ENCODE measurements at regions of chr17 and their contacts with region 1.

Region 1: DNA sequence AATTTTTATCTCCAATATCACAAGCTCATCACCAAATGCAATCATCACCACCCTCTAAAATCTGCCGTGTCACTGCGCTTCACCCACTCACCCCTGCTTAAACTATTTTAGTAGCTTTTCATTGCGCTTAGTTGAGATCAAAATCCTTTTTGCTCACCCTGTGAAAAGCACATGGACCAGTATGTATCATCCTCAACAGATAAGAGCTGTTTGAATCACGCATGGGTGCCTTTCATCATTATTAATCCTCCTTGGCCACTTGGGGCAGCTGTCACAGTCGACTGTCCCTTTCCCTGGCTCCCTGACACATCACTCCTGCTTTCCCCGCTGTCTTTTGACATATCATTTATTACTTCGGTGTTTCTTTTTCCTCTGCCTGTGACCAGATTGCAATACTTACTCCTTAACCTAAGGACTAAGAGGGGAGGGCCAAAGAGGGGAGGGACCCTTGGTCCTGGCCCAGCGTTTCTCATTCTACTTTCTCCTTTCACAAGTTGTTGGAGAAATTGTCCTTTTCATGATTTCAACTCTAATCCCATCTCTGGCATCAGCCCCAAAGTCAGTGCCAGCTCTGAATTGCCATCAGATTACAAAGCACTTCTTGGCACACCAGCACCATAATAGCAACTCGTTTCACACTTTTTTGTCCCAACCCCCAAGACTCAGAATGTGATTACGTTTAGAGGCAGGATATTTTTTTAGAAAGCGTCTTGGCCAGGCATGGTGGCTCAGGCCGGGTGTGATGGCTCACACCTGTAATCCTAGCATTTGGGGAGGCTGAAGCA is 8.6 kb upstream of the KDM6B start:
- DNase-seq: no peak
- H3K4me3 ChIP-seq: no peak overlapping the region
- CTCF ChIP-seq: no peak

Region 2: GRCh38 chr17:7740481-7741001 is 84.9 kb before region 1 on chr17:
- CTCF ChIA-PET with region 1: interaction called, 13 read pairs
- POLR2A ChIA-PET with region 1: no interaction called
- DNase-seq: no peak
- H3K4me3 ChIP-seq: no peak overlapping the region
- CTCF ChIP-seq: no peak

Region 3: DNA sequence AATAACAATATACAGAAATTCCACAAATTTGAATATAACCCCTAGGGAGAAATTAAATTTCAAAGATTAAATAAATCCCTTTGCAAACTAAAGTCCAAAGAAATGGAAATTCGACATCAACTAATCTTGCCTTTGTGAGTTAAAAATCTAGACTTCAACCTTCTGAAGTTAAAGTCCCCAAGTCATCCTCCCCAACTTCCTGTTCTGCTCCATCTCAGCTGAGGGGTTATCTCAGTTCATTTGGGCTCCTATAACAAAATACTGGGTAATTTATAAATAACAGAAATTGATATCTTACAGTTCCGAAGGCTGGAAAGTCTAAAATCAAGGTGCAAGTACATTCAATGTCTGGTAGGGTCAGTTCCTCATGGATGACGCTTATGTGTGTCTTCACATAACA is 14.1 kb before region 1 on chr17:
- CTCF ChIA-PET with region 1: interaction called, 47 read pairs
- POLR2A ChIA-PET with region 1: no interaction called
- DNase-seq: no peak
- H3K4me3 ChIP-seq: no peak overlapping the region
- CTCF ChIP-seq: no peak

Region 4: GRCh38 chr17:7851438-7852256 is 26.2 kb after region 1 on chr17:
- CTCF ChIA-PET with region 1: interaction called, 40 read pairs
- POLR2A ChIA-PET with region 1: no interaction called
- DNase-seq: no peak
- H3K4me3 ChIP-seq: no peak overlapping the region
- CTCF ChIP-seq: peak; percentile 93

Region 5: DNA sequence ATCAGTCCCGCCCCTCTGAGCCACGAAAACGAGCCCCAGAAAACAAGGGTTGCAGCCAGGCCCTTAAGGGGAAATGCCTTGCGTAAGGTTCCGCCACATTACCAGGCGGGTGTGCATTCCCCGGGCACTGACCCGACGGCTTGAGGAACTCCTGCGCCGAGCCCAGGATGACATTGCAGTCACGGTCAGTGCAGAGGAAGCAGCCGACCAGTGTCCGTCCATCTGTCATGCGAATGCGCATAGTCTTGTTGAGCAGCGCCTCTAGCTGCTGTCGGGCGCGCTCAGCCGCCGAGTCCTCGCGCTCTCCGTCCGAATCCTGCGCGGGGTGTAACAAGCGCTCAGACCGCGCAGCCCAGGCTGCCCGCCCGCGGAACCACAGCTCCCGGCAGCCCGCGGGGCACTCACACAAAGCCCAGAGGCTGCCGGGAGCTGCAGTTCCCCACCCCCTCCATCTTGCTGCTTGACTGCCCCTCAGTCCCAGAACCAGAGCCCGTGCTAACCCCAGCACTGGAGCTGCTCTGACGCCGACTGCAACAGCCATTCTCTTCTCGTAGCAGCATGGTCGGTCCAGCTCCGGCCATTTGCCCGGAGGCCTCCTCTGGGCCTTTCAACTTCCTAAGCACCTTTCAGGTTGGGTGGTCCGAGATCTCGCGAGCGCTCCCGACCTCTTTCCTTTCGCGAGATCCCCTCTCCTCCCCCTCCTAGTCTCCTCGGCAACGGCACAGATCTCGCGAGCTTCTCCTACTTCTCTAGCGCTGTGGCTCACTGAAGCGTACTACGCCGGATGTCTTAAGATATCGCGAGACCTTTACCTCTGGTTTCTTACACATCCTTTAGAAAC is 31.7 kb after region 1 on chr17 and contains the start of gene NAA38:
- CTCF ChIA-PET with region 1: interaction called, 40 read pairs
- POLR2A ChIA-PET with region 1: no interaction called
- DNase-seq: peak; percentile 97
- H3K4me3 ChIP-seq: peak within 1 kb of the TSS; percentile 80
- CTCF ChIP-seq: peak; percentile 71

Region 6: GRCh38 chr17:7862692-7863437 is 37.5 kb after region 1 on chr17:
- CTCF ChIA-PET with region 1: interaction called, 12 read pairs
- POLR2A ChIA-PET with region 1: no interaction called
- DNase-seq: no peak
- H3K4me3 ChIP-seq: no peak overlapping the region
- CTCF ChIP-seq: peak; percentile 59

Region 7: GRCh38 chr17:7897773-7898172 is 72.4 kb after region 1 on chr17:
- CTCF ChIA-PET with region 1: interaction called, 25 read pairs
- POLR2A ChIA-PET with region 1: no interaction called
- DNase-seq: no peak
- H3K4me3 ChIP-seq: no peak overlapping the region
- CTCF ChIP-seq: peak; percentile 44